Panc1 (cell line): ENCODE measurements at regions of chr1 and their contacts with region 1.

Region 1: GRCh38 chr1:5637171-5637570 is 355.1 kb downstream of the NPHP4 start:
- DNase-seq: no peak
- ATAC-seq: no peak
- H3K4me3 ChIP-seq: no peak overlapping the region
- H3K27ac ChIP-seq: no peak overlapping the region
- H3K4me1 ChIP-seq: no peaks in the 10 kb centered on the region
- H3K27me3 ChIP-seq: peaks cover 2% of the 10 kb centered on the region; the same call in 1 of the 2 replicates
- CTCF ChIP-seq: peak; percentile 77

Region 2: GRCh38 chr1:4847711-4848110 is 789.5 kb before region 1 on chr1:
- CTCF ChIA-PET with region 1: no interaction called
- POLR2A ChIA-PET with region 1: no interaction called
- in situ Hi-C with region 1: no loop called
- intact Hi-C with region 1: no loop called
- DNase-seq: no peak
- ATAC-seq: no peak
- H3K4me3 ChIP-seq: no peak overlapping the region
- H3K27ac ChIP-seq: no peak overlapping the region
- H3K4me1 ChIP-seq: no peaks in the 10 kb centered on the region
- H3K27me3 ChIP-seq: no peaks in the 10 kb centered on the region
- CTCF ChIP-seq: no peak

Region 3: DNA sequence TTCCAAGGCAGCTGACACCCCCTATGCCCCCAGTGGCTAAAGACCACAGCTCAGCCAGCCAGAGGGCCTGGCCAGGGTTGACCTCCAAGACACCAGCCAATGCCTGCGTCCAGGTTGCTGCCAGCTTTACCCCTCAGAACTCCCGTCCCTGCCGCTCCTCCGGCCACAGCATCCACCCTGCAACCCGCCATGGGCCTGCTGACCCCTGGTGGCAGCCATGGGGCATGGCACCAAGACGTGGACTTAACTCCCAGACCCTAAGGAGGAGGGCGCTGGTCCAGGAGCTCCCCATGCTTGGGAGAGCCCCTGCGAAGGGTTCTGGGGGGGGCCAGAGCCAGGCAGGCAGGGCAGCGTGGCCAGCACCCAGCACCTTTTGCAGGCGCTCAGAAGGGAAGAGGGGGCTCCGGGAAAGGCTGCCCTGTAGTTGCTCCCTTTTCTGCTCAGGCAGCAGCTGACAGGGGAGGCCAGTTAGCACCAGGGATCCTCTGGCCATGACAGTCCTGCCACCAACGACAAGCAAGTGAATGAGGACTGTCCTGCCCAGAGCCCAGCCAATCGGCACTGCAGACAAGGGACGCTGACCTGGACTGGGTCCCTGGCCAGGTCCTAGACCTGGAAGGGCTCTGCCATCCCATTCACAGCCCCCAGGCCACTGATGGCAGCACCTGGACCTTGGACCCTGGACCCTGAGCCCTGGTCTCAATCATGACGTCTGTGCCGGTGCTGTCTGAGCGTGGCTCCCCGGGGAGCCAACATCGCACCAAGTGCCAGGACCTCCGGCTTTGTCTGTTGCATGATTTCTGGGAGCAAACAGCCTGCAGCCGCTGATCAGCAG is 108.8 kb after region 1 on chr1:
- CTCF ChIA-PET with region 1: interaction called, 6 read pairs
- POLR2A ChIA-PET with region 1: no interaction called
- in situ Hi-C with region 1: no loop called
- intact Hi-C with region 1: loop called (anchors 2 kb)
- DNase-seq: peak; percentile 27
- ATAC-seq: peak; percentile 92
- H3K4me3 ChIP-seq: no peak overlapping the region
- H3K27ac ChIP-seq: no peak overlapping the region
- H3K4me1 ChIP-seq: peaks cover 2% of the 10 kb centered on the region; the same call in 1 of the 2 replicates
- H3K27me3 ChIP-seq: peaks cover 3% of the 10 kb centered on the region; the same call in 1 of the 2 replicates
- CTCF ChIP-seq: peak; percentile 99